Colonic mucosa (tissue), 4 donors: ENCODE measurements at regions of chr11 and their contacts with region 1.

Region 1: GRCh38 chr11:9861860-9862725 is 198.2 kb downstream of the SWAP70 start:
- DNase-seq: peak; percentile 66
- H3K4me3 ChIP-seq: no peak overlapping the region
- H3K27ac ChIP-seq: no peak overlapping the region
- H3K4me1 ChIP-seq: peaks cover 6% of the 10 kb centered on the region
- H3K27me3 ChIP-seq: no peaks in the 10 kb centered on the region
- CTCF ChIP-seq: peak; percentile 73

Region 2: DNA sequence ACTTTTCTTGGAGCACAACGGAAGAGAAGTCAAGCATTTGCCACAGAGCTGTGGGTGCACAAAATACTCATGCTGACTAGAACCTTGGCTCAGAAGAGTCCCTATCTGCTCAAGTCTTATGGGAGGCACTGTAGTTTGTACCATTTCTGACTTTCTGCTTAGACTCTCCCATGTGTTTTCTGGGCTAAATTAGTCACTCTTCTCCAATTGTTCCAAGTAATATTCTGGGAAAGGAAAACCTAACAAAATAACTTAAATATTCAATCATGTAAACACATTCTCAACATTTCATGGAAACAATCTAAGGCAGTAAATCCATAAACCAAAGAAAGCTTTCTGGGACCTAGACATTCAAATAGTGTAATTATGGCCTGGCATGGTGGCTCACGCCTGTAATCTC is 22.5 kb after region 1 on chr11:
- intact Hi-C with region 1: no loop called
- DNase-seq: no peak
- H3K4me3 ChIP-seq: no peak overlapping the region
- H3K27ac ChIP-seq: no peak overlapping the region
- H3K4me1 ChIP-seq: no peaks in the 10 kb centered on the region
- H3K27me3 ChIP-seq: no peaks in the 10 kb centered on the region
- CTCF ChIP-seq: no peak

Region 3: GRCh38 chr11:9972989-9973388 is 110.9 kb after region 1 on chr11:
- intact Hi-C with region 1: loop called (anchors 5 kb)
- DNase-seq: no peak
- H3K4me3 ChIP-seq: no peak overlapping the region
- H3K27ac ChIP-seq: no peak overlapping the region
- H3K4me1 ChIP-seq: no peaks in the 10 kb centered on the region
- H3K27me3 ChIP-seq: no peaks in the 10 kb centered on the region
- CTCF ChIP-seq: peak; percentile 56

Region 4: GRCh38 chr11:10076458-10077141 is 214.5 kb after region 1 on chr11:
- intact Hi-C with region 1: loop called (anchors 5 kb)
- DNase-seq: peak; percentile 31
- H3K4me3 ChIP-seq: no peak overlapping the region
- H3K27ac ChIP-seq: no peak overlapping the region
- H3K4me1 ChIP-seq: no peaks in the 10 kb centered on the region
- H3K27me3 ChIP-seq: no peaks in the 10 kb centered on the region
- CTCF ChIP-seq: peak; percentile 51

Region 5: DNA sequence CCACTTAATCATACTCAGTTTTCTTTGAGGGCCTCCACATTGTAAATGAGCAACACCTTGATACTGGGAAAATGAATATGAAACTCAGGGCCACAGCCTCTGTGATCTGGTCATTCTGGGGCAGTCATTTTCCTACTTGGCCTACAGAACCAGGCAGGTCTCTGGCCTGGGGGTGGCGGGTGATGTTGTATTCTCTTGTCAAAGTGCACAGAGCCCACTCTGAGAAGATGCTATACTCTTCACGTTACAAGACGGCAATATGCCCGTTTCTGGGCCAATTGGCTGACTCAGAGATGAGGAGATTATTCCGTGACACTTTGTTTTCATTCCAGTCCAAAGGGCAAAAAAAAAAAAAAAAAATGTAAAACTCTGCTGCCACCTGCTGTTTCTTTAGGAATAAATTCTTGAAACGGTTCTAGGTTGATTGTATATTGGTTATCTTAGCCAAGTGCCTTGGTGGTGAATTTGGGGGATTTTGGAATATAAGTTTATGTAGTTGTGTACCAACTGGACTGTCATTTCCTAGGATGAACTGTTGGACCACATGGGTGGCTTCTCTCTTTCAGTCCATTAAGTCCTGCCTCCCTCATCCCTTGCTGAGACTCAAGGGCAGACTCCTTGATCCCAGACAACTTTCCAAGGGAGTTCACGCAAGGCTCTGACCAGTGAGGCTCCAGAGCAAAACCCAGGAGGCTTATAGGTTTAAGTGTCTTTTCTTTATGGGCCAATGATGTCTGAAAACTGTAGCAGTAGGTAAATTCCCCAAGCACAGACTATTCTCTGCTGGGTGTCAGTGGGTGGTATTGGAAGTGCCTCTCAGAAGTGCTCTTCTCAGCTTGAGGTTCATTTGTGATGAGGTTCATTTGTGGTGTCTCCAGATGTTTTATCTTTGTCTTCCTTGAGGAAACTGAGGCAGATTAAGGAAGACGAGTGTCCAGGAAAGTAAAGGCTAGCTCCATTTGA is 461.0 kb after region 1 on chr11:
- intact Hi-C with region 1: loop called (anchors 10 kb)
- DNase-seq: peak; percentile 79
- H3K4me3 ChIP-seq: no peak overlapping the region
- H3K27ac ChIP-seq: peak overlapping the region; percentile 58
- H3K4me1 ChIP-seq: peaks cover 10% of the 10 kb centered on the region
- H3K27me3 ChIP-seq: no peaks in the 10 kb centered on the region
- CTCF ChIP-seq: peak; percentile 45